Endothelial cell of umbilical vein (primary cell): ENCODE measurements at regions of chr7 and their contacts with region 1.

Region 1: GRCh38 chr7:22647451-22648257 is 79.3 kb upstream of the IL6 start:
- DNase-seq: peak; percentile 74
- H3K4me3 ChIP-seq: no peak overlapping the region
- H3K27ac ChIP-seq: peak overlapping the region; percentile 93
- H3K4me1 ChIP-seq: peaks cover 49% of the 10 kb centered on the region
- H3K27me3 ChIP-seq: no peaks in the 10 kb centered on the region
- CTCF ChIP-seq: no peak
- POLR2A ChIP-seq: peak; percentile 31

Region 2: GRCh38 chr7:22127835-22128527 is 519.7 kb before region 1 on chr7:
- CTCF ChIA-PET with region 1: no interaction called
- POLR2A ChIA-PET with region 1: no interaction called
- dilution Hi-C with region 1: no loop called
- intact Hi-C with region 1: loop called (anchors 5 kb)
- DNase-seq: peak; percentile 97
- H3K4me3 ChIP-seq: no peak overlapping the region
- H3K27ac ChIP-seq: peak overlapping the region; percentile 91
- H3K4me1 ChIP-seq: peaks cover 55% of the 10 kb centered on the region
- H3K27me3 ChIP-seq: no peaks in the 10 kb centered on the region
- CTCF ChIP-seq: no peak
- POLR2A ChIP-seq: no peak

Region 3: DNA sequence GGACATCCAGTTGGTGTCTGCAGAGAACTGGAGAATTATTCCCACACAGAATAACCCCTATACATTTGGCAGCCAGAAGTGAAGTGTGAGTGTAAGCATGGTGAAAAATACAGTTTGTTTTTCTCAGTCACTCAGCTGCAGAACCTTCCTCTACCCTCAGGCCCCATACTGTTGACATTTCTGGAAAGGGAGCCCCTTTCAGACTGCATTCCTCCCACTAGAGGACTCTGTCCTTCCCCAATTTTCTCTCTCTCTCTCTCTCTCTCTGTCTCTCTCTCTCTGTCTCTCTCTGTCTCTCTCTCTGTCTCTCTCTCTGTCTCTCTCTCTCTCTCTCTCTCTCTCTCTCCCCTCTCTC is 60.9 kb before region 1 on chr7:
- CTCF ChIA-PET with region 1: interaction called, 5 read pairs
- POLR2A ChIA-PET with region 1: interaction called, 4 read pairs
- dilution Hi-C with region 1: no loop called
- intact Hi-C with region 1: loop called (anchors 1 kb)
- DNase-seq: no peak
- H3K4me3 ChIP-seq: no peak overlapping the region
- H3K27ac ChIP-seq: peak overlapping the region; percentile 95
- H3K4me1 ChIP-seq: peaks cover 75% of the 10 kb centered on the region
- H3K27me3 ChIP-seq: no peaks in the 10 kb centered on the region
- CTCF ChIP-seq: peak; percentile 34 to 56
- POLR2A ChIP-seq: no peak

Region 4: DNA sequence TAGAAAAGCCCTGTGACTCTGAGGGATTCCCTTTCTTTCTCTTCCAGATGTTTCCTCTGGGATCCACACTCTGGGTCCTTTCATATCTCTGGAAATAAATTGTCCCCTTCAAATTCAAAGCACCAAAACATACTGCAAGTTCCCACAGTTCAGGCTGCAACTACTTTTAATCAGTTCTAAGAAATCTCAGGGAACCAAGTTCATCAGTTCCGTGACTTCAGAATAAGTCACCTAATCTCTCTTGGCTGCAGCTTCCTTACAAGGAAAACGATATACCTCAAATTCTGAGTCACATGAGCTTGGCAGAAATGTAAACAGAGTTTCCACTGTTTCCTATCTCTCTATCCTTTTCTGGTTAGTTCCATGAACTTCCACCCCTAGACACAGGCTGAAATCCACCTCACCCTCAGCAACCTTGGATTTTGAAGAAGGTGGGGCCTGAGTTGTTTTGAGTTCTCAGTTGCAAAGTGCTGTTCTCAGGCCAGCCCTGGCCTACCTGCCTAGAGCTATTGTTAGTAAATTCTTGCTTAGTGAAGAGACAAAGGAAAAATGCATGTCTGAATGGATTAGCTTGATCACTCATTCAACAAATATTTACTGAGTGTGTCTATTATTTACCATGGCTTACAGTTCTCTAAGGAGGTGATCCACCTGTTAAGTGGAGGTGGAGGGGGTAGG is 20.0 kb after region 1 on chr7:
- CTCF ChIA-PET with region 1: no interaction called
- POLR2A ChIA-PET with region 1: interaction called, 6 read pairs
- dilution Hi-C with region 1: no loop called
- intact Hi-C with region 1: loop called (anchors 1 kb)
- DNase-seq: peak; percentile 83
- H3K4me3 ChIP-seq: no peak overlapping the region
- H3K27ac ChIP-seq: peak overlapping the region; percentile 76
- H3K4me1 ChIP-seq: peaks cover 67% of the 10 kb centered on the region
- H3K27me3 ChIP-seq: no peaks in the 10 kb centered on the region
- CTCF ChIP-seq: no peak
- POLR2A ChIP-seq: no peak

Region 5: DNA sequence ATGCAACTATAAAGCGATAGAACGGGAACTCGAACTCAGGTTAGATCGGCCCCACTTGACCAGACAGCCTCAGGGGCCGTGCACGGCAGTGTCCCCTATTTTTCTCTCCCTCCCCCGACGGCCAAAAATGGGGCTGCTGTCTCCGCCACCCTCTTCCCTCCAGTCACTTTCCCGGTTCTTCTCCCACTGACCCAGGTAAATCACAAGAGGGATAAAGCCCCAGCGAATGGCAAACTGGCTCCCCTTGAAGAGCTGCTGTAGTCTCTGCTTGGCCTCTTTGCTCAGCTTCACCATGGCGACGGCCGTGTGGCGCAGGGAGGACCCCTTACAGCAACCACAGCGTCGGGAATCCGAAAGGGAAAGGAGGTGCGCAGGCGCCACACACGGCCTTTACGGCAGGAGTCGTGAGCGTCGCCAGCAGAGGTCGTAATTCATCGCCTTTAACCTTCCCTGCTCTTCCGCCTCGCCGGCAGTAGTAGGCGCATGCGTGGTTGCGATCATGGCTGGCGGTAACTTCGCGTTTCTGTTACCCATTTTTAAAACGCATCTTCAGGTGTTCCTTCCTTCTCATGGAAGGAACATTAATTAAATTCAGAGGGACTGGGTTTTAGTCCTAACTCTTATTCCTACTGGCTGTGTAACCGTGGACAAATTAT is 175.0 kb after region 1 on chr7 and contains the start of gene TOMM7:
- CTCF ChIA-PET with region 1: no interaction called
- POLR2A ChIA-PET with region 1: no interaction called
- dilution Hi-C with region 1: no loop called
- intact Hi-C with region 1: loop called (anchors 2 kb)
- DNase-seq: peak; percentile 99
- H3K4me3 ChIP-seq: peak within 1 kb of the TSS; percentile 50 to 93 (median 75)
- H3K27ac ChIP-seq: peak within 1 kb of the TSS; percentile 60
- H3K4me1 ChIP-seq: peaks cover 5% of the 10 kb centered on the region
- H3K27me3 ChIP-seq: peaks cover 2 to 11% of the 10 kb centered on the region in 2 experiments
- CTCF ChIP-seq: no peak
- POLR2A ChIP-seq: peak; percentile 95
- total RNA-seq, gene TOMM7: 185 and 200 TPM in 2 replicates

Region 6: GRCh38 chr7:23013715-23014649 is 366.3 kb after region 1 on chr7 and contains the start of gene HYCC1:
- CTCF ChIA-PET with region 1: no interaction called
- POLR2A ChIA-PET with region 1: no interaction called
- dilution Hi-C with region 1: no loop called
- intact Hi-C with region 1: loop called (anchors 5 kb)
- DNase-seq: peak; percentile 99
- H3K4me3 ChIP-seq: peak within 1 kb of the TSS; percentile 66 to 94 (median 71)
- H3K27ac ChIP-seq: peak within 1 kb of the TSS; percentile 20
- H3K4me1 ChIP-seq: peaks cover 47% of the 10 kb centered on the region
- H3K27me3 ChIP-seq: no peaks in the 10 kb centered on the region
- CTCF ChIP-seq: peak; percentile 59 to 72
- POLR2A ChIP-seq: peak; percentile 96
- total RNA-seq, gene HYCC1: 43.2 and 51.8 TPM in 2 replicates